Caco-2 (cell line): ENCODE measurements at regions of chr9 and their contacts with region 1.

Region 1: DNA sequence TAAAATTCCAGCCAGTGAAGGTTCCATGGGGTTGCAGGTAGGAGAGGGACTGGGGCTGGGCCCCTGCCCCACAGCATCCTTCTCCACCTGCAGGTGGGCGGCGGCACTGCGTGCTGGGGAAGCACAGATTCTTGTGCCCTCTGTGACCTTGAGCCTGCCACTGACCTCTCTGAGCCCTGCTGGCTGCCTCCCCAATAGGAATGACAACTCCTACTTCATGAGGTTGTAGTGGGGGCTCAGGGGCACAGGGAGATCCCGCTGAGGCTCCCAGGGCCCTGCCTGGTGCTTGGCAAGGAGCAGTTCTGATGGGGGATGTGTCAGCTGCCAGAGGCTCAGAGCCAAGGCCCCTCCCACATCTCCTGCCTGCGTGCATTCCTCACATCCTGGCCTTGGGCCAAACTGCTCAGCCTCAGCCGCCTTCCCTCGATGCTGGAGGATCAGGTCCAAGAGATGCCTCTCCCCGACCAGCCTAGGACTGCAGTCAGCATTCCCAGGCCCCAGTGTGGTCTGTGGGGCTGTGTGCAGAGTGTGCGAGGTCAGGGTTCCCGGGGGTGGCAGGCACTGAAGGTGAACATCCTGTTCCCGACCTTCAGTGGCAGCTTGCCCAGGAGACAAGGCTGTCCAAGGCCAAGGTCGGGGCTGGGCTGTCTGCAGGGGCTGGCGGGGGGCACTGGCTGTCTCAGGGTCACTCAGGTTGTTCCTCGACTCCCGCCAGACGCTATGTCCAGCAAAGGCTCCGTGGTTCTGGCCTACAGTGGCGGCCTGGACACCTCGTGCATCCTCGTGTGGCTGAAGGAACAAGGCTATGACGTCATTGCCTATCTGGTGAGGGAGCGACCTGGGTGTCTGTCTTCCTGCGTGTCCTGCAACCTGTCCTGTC is 7.0 kb downstream of the ASS1 start:
- DNase-seq: peak; percentile 74 to 76
- H3K4me3 ChIP-seq: no peak overlapping the region
- H3K4me3 Mint-ChIP-seq: no peak overlapping the region
- H3K27ac Mint-ChIP-seq: no peak overlapping the region
- H3K4me1 ChIP-seq: peaks cover 40% of the 10 kb centered on the region
- H3K4me1 Mint-ChIP-seq: peaks cover 15% of the 10 kb centered on the region
- H3K27me3 ChIP-seq: no peaks in the 10 kb centered on the region
- H3K27me3 Mint-ChIP-seq: no peaks in the 10 kb centered on the region
- CTCF ChIP-seq: peak; percentile 57 to 74

Region 2: GRCh38 chr9:130053504-130054324 is 398.0 kb before region 1 on chr9 and contains the start of gene GPR107:
- CTCF ChIA-PET with region 1: no interaction called
- POLR2A ChIA-PET with region 1: no interaction called
- intact Hi-C with region 1: no loop called
- DNase-seq: peak; percentile 76 to 84
- H3K4me3 ChIP-seq: peak within 1 kb of the TSS; percentile 75
- H3K4me3 Mint-ChIP-seq: peak within 1 kb of the TSS; percentile 99
- H3K27ac Mint-ChIP-seq: peak within 1 kb of the TSS; percentile 96
- H3K4me1 ChIP-seq: 0 out of 2 replicates have a peak, but pooled peaks cover 3% of the 10 kb centered on the region
- H3K4me1 Mint-ChIP-seq: no peaks in the 10 kb centered on the region
- H3K27me3 ChIP-seq: no peaks in the 10 kb centered on the region
- H3K27me3 Mint-ChIP-seq: no peaks in the 10 kb centered on the region
- CTCF ChIP-seq: no peak
- total RNA-seq, gene GPR107: 49.8 and 53.1 TPM in 2 replicates

Region 3: GRCh38 chr9:130382636-130383349 is 69.0 kb before region 1 on chr9:
- CTCF ChIA-PET with region 1: no interaction called
- POLR2A ChIA-PET with region 1: no interaction called
- intact Hi-C with region 1: loop called (anchors 5 kb)
- DNase-seq: no peak
- H3K4me3 ChIP-seq: no peak overlapping the region
- H3K4me3 Mint-ChIP-seq: no peak overlapping the region
- H3K27ac Mint-ChIP-seq: no peak overlapping the region
- H3K4me1 ChIP-seq: no peaks in the 10 kb centered on the region
- H3K4me1 Mint-ChIP-seq: no peaks in the 10 kb centered on the region
- H3K27me3 ChIP-seq: no peaks in the 10 kb centered on the region
- H3K27me3 Mint-ChIP-seq: no peaks in the 10 kb centered on the region
- CTCF ChIP-seq: no peak

Region 4: DNA sequence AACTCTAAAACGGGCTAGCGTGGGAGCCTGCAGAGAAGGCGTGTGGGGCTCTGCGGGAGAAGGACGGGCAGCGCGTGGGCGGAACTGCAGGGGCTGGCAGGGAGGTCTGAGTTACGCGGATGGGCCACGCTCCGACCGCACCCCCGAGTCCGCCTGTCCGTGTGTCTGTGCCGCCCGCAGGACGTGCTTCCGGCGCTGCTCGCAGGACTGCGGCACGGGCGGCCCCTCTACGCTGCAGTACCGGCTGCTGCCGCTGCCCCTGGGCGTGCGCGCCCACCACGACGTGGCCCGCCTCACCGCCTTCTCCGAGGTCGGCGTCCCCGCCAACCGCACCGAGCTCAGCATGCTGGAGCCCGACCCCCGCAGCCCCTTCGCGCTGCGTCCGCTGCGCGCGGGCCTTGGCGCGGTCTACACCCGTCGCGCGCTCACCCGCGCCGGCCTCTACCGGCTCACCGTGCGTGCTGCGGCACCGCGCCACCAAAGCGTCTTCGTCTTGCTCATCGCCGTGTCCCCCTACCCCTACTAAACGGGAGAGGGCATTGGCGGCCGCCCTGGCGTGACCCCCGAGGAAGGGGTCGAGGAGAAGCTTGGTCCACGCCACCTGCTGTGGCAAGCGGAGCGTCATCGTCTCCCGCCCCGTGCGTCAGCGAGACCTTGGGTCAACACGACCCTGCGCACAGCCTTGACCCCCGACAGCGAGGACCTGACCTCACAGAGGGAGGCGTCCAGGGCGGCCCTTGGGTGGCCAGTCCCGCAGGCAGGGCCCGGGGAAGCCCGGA is 18.4 kb before region 1 on chr9:
- CTCF ChIA-PET with region 1: no interaction called
- POLR2A ChIA-PET with region 1: interaction called, 4 read pairs
- intact Hi-C with region 1: loop called (anchors 1 kb)
- DNase-seq: peak; percentile 67 to 79
- H3K4me3 ChIP-seq: peak overlapping the region; percentile 61
- H3K4me3 Mint-ChIP-seq: peak overlapping the region; percentile 73
- H3K27ac Mint-ChIP-seq: no peak overlapping the region
- H3K4me1 ChIP-seq: peaks cover 13% of the 10 kb centered on the region
- H3K4me1 Mint-ChIP-seq: no peaks in the 10 kb centered on the region
- H3K27me3 ChIP-seq: no peaks in the 10 kb centered on the region
- H3K27me3 Mint-ChIP-seq: no peaks in the 10 kb centered on the region
- CTCF ChIP-seq: peak; percentile 39 to 63

Region 5: GRCh38 chr9:130480331-130481072 is 28.8 kb after region 1 on chr9:
- CTCF ChIA-PET with region 1: no interaction called
- POLR2A ChIA-PET with region 1: no interaction called
- intact Hi-C with region 1: no loop called
- DNase-seq: no peak
- H3K4me3 ChIP-seq: no peak overlapping the region
- H3K4me3 Mint-ChIP-seq: no peak overlapping the region
- H3K27ac Mint-ChIP-seq: no peak overlapping the region
- H3K4me1 ChIP-seq: no peaks in the 10 kb centered on the region
- H3K4me1 Mint-ChIP-seq: no peaks in the 10 kb centered on the region
- H3K27me3 ChIP-seq: no peaks in the 10 kb centered on the region
- H3K27me3 Mint-ChIP-seq: no peaks in the 10 kb centered on the region
- CTCF ChIP-seq: peak in 1 of 2 experiments; percentile 6